Activated CD4-positive, alpha-beta memory T cell treated with anti-CD3 and anti-CD28 coated beads, Interleukin-2, amount 10 ng/mL, durations not matched to agents 7 days and 5 days (primary cell): ENCODE measurements at regions of chr12 and their contacts with region 1.

Region 1: GRCh38 chr12:31959161-31959700 is at the start of gene RESF1:
- DNase-seq: peak; percentile 92
- H3K4me3 Mint-ChIP-seq: peak within 1 kb of the TSS; percentile 91
- H3K27ac Mint-ChIP-seq: peak within 1 kb of the TSS; percentile 98
- H3K4me1 Mint-ChIP-seq: peaks cover 65% of the 10 kb centered on the region
- H3K27me3 Mint-ChIP-seq: no peaks in the 10 kb centered on the region
- total RNA-seq, gene RESF1: 152 to 154 TPM

Region 2: GRCh38 chr12:31578632-31579031 is 380.6 kb before region 1 on chr12:
- CTCF ChIA-PET with region 1: no interaction called
- POLR2A ChIA-PET with region 1: no interaction called
- DNase-seq: no peak
- H3K4me3 Mint-ChIP-seq: no peak overlapping the region
- H3K27ac Mint-ChIP-seq: no peak overlapping the region
- H3K4me1 Mint-ChIP-seq: peaks cover 6% of the 10 kb centered on the region
- H3K27me3 Mint-ChIP-seq: peaks cover 5% of the 10 kb centered on the region

Region 3: GRCh38 chr12:31682136-31682962 is 276.9 kb before region 1 on chr12:
- CTCF ChIA-PET with region 1: interaction called, 8 read pairs
- POLR2A ChIA-PET with region 1: interaction called, 17 read pairs
- DNase-seq: peak; percentile 74
- H3K4me3 Mint-ChIP-seq: no peak overlapping the region
- H3K27ac Mint-ChIP-seq: no peak overlapping the region
- H3K4me1 Mint-ChIP-seq: peaks cover 14% of the 10 kb centered on the region
- H3K27me3 Mint-ChIP-seq: no peaks in the 10 kb centered on the region

Region 4: DNA sequence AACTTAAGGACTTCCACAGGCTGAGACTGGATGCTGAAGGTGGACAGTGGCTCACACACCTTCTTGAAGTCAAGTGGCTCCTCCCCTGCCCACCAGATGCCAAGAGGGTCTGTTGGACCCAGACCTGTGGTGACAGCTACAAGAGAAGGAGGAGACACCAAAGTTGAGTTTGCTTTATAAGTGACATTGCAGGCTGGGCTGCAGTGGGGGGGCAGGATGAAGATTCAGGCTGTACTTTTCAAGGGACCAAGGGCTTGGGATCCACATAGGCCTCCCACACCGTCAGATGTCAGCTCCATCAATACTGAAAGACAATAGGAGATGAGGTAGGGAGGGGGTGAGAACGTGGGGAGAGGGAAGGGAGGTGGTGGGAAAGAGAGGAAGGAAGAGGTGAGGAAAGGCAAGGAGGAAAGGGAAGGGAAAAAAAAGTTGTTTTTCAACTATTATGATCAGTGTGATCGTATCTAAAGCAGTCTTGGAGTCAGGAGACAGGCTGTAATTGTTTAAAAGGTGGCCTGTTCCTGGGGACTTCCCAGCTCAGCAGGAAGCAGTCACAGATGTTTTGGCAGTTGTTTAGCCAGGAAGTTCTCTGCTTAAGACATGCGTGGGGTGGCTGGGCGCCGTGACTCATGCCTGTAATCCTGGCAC is 84.1 kb before region 1 on chr12:
- CTCF ChIA-PET with region 1: interaction called, 8 read pairs
- POLR2A ChIA-PET with region 1: interaction called, 12 read pairs
- DNase-seq: peak; percentile 63
- H3K4me3 Mint-ChIP-seq: no peak overlapping the region
- H3K27ac Mint-ChIP-seq: peak overlapping the region; percentile 92
- H3K4me1 Mint-ChIP-seq: peaks cover 24% of the 10 kb centered on the region
- H3K27me3 Mint-ChIP-seq: no peaks in the 10 kb centered on the region

Region 5: DNA sequence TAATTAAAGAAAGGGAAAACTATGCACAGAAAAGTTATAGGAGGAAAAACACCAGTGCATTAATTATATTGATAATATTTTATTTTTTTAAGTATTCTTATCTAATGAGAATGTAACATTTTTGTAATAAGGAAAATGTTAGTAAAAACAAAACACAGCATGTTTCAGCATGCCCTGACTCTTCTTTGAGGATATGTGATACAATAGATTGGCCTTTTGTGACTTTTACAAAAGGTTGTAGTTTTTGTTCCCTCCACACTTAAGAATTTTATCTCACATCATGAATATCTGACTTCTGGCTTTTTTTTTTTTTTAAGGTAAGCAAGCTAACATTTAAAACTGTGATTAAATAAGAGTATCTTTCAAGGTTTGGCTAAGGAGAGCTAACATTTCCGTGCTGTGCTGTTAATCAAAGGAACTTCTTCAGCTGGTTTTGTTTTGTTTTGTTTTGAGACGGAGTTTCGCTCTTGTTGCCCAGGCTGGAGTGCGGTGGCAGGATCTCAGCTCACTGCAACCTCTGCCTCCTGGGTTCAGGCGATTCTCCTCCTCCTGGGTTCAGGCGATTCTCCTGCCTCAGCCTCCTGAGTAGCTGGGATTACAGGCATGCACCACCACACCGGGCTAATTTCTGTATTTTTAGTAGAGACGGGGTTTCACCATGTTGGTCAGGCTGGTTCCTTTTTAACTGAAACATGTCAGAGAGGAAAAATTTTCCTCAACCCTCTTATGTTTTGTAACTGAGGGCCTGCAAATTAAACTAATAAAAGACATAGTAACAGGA is 30.8 kb before region 1 on chr12:
- CTCF ChIA-PET with region 1: interaction called, 3 read pairs
- POLR2A ChIA-PET with region 1: interaction called, 17 read pairs
- DNase-seq: peak; percentile 42
- H3K4me3 Mint-ChIP-seq: peak overlapping the region; percentile 72
- H3K27ac Mint-ChIP-seq: peak overlapping the region; percentile 95
- H3K4me1 Mint-ChIP-seq: peaks cover 42% of the 10 kb centered on the region
- H3K27me3 Mint-ChIP-seq: no peaks in the 10 kb centered on the region

Region 6: GRCh38 chr12:31991815-31992214 is 32.6 kb after region 1 on chr12:
- CTCF ChIA-PET with region 1: interaction called, 5 read pairs
- POLR2A ChIA-PET with region 1: interaction called, 10 read pairs
- DNase-seq: no peak
- H3K4me3 Mint-ChIP-seq: no peak overlapping the region
- H3K27ac Mint-ChIP-seq: peak overlapping the region; percentile 83
- H3K4me1 Mint-ChIP-seq: peaks cover 44% of the 10 kb centered on the region
- H3K27me3 Mint-ChIP-seq: no peaks in the 10 kb centered on the region